Heart left ventricle (tissue), 16 donors: ENCODE measurements at regions of chrX and their contacts with region 1.

Region 1: GRCh38 chrX:134537179-134537955 is 77.4 kb downstream of the HPRT1 start:
- DNase-seq: no peak
- ATAC-seq: peak; percentile 68 to 89 (median 79)
- H3K4me3 ChIP-seq: no peak overlapping the region
- H3K27ac ChIP-seq: peak overlapping the region in 8 of 12 donors; percentile 12 to 67 (median 38)
- H3K4me1 ChIP-seq: peaks cover 0 to 17% (median under 1%) of the 10 kb centered on the region in 12 donors
- H3K27me3 ChIP-seq: no peaks in the 10 kb centered on the region
- CTCF ChIP-seq: no peak
- POLR2A ChIP-seq: no peak

Region 2: GRCh38 chrX:134734466-134734952 is 197.1 kb after region 1 on chrX:
- intact Hi-C with region 1: loop called in 1 of 10 experiments (anchors 5 kb)
- DNase-seq: peak in 1 of 5 donors; percentile 10
- ATAC-seq: no peak
- H3K4me3 ChIP-seq: no peak overlapping the region
- H3K27ac ChIP-seq: no peak overlapping the region
- H3K4me1 ChIP-seq: peaks cover 0 to 17% (median 0%) of the 10 kb centered on the region in 12 donors
- H3K27me3 ChIP-seq: peaks cover 0 to under 1% (median 0%) of the 10 kb centered on the region in 9 donors
- CTCF ChIP-seq: no peak
- POLR2A ChIP-seq: no peak